CD14-positive monocyte (primary cell): ENCODE measurements at regions of chr17 and their contacts with region 1.

Region 1: GRCh38 chr17:30363715-30364202 is 15.0 kb upstream of the CPD start:
- DNase-seq: peak; percentile 89 to 96 (median 91)
- H3K4me3 ChIP-seq: peak overlapping the region in 1 of 3 experiments; percentile 23
- H3K4me3 Mint-ChIP-seq: peak overlapping the region in 1 of 2 donors; percentile 43
- H3K27ac ChIP-seq: peak overlapping the region; percentile 1 to 60
- H3K27ac Mint-ChIP-seq: peak overlapping the region; percentile 73 to 88 (median 83)
- H3K4me1 ChIP-seq: peaks cover 32 to 44% of the 10 kb centered on the region in 2 donors
- H3K4me1 Mint-ChIP-seq: peaks cover 38% of the 10 kb centered on the region
- H3K27me3 ChIP-seq: no peaks in the 10 kb centered on the region
- H3K27me3 Mint-ChIP-seq: no peaks in the 10 kb centered on the region
- CTCF ChIP-seq: no peak

Region 2: DNA sequence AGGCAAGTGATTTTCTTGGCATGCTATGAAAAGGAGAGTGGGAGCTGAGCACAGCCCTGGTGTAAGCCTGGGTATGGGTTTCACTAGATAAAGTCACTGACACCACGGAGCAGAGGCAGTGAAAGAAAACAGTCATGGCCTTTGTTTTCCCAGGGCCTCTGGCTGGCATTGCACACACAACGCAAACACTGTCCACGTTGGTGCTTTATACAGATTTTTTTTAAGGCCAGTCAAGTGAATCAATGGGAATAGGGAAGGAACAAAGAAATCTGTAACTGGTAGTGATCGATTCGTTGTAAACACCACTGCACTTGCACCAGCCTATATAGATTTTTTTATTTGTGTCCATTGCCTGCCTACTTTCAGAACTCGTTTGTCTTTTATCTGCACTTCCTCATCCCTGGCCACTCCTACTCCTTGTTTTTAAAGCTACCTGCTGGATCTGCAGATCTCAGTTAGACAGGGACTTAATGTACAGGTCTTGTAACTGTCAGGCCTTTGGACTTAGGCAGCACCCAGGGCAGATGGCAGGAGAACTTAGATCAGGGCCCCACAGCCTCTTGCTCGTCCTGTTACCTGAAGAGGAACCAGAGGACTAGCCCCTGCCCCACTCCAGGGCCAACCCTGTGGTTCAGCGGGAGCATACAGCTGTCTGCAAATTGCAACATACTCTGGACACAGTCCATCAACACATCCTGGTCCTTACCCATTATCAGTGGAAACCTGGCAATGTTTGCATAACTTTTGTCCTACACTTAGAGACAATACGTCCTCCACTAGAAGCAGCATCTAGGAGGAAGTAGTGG is 19.3 kb before region 1 on chr17:
- intact Hi-C with region 1: loop called in 1 of 2 experiments (anchors 2 kb)
- DNase-seq: peak; percentile 47 to 76 (median 66)
- H3K4me3 ChIP-seq: peak overlapping the region in 1 of 3 experiments; percentile 52
- H3K4me3 Mint-ChIP-seq: peak overlapping the region; percentile 10 to 71
- H3K27ac ChIP-seq: peak overlapping the region; percentile 73 to 80
- H3K27ac Mint-ChIP-seq: peak overlapping the region; percentile 82 to 94 (median 90)
- H3K4me1 ChIP-seq: peaks cover 41 to 56% of the 10 kb centered on the region in 2 donors
- H3K4me1 Mint-ChIP-seq: peaks cover 53% of the 10 kb centered on the region
- H3K27me3 ChIP-seq: no peaks in the 10 kb centered on the region
- H3K27me3 Mint-ChIP-seq: no peaks in the 10 kb centered on the region
- CTCF ChIP-seq: no peak